Ovary (tissue), 10 donors: ENCODE measurements at regions of chr6 and their contacts with region 1.

Region 1: DNA sequence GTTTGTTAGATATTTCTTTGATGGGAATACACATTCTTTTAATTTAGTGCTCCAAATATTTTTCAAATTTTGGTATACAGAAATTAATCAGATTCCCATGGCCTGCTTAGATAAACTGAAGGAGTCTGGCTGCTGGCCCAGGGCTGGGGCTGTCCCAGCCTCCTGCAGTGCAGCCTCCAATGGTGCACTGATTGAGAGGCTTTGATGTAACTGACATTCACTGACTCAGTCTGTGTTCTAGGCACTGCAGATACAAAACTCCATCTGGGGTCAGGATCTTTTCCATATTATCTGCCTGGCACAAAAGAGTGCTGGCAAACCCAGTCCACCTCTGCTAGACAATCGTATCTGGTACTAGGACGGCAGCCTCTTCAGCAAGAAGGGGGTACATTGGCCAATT is 64.8 kb downstream of the GRIK2 start:
- DNase-seq: no peak
- H3K4me3 ChIP-seq: no peak overlapping the region
- H3K27ac ChIP-seq: no peak overlapping the region
- H3K4me1 ChIP-seq: no peaks in the 10 kb centered on the region
- H3K27me3 ChIP-seq: no peaks in the 10 kb centered on the region
- CTCF ChIP-seq: no peak
- EP300 ChIP-seq: no peak
- POLR2A ChIP-seq: no peak

Region 2: DNA sequence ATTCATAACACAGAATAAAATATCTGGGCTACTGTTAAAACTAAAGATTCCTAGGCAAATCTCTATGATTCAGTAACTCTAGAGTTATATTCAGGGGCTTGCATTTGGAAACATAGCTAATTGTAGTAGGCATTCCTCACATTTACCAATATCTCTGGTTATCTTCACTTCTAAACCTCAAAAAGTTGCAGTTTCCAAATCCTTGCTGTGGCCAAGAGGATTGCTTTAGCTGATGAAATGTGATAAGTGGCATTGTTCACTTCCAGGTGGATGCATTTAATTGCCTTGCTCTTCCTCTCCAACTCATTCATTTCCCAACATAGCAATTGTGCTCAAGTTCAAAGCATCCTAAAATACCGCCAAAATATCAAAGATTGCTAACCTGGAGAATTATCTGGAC is 181.8 kb after region 1 on chr6:
- intact Hi-C with region 1: no loop called
- DNase-seq: no peak
- H3K4me3 ChIP-seq: no peak overlapping the region
- H3K27ac ChIP-seq: no peak overlapping the region
- H3K4me1 ChIP-seq: no peaks in the 10 kb centered on the region
- H3K27me3 ChIP-seq: no peaks in the 10 kb centered on the region
- CTCF ChIP-seq: no peak
- EP300 ChIP-seq: no peak
- POLR2A ChIP-seq: no peak

Region 3: DNA sequence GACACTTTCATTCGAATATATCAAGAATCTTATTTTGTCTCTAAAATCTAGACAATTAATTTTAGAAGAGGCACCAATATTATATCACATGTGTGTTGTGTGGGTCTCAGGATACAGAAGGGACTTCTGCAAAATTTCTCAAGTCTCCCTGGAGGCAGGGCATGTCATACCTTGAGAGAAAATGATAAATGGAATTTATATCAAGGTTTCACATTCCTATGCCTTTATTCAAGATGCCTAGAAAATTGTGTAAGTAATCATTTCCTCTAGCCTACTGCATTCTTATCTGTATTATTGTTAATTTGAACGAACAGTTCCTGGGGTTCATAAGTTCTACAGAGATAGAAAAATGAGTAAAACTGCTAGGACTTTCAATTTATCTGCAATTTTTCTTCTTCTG is 1183.1 kb after region 1 on chr6:
- intact Hi-C with region 1: loop called in 1 of 4 experiments (anchors 5 kb)
- DNase-seq: no peak
- H3K4me3 ChIP-seq: no peak overlapping the region
- H3K27ac ChIP-seq: no peak overlapping the region
- H3K4me1 ChIP-seq: no peaks in the 10 kb centered on the region
- H3K27me3 ChIP-seq: no peaks in the 10 kb centered on the region
- CTCF ChIP-seq: no peak
- EP300 ChIP-seq: no peak
- POLR2A ChIP-seq: no peak